ENCODE measurements at regions of chr7 and their contacts with region 1.

Region 1: GRCh38 chr7:131945313-131945911 is 389.0 kb upstream of the PODXL start:
- DNase-seq: no peak
- H3K4me3 ChIP-seq: peak overlapping the region; percentile 32
- CTCF ChIP-seq: peak; percentile 93

Region 2: GRCh38 chr7:131654668-131655326 is 290.6 kb before region 1 on chr7:
- CTCF ChIA-PET with region 1: no interaction called
- POLR2A ChIA-PET with region 1: no interaction called
- DNase-seq: peak; percentile 1
- H3K4me3 ChIP-seq: no peak overlapping the region
- CTCF ChIP-seq: peak; percentile 99

Region 3: DNA sequence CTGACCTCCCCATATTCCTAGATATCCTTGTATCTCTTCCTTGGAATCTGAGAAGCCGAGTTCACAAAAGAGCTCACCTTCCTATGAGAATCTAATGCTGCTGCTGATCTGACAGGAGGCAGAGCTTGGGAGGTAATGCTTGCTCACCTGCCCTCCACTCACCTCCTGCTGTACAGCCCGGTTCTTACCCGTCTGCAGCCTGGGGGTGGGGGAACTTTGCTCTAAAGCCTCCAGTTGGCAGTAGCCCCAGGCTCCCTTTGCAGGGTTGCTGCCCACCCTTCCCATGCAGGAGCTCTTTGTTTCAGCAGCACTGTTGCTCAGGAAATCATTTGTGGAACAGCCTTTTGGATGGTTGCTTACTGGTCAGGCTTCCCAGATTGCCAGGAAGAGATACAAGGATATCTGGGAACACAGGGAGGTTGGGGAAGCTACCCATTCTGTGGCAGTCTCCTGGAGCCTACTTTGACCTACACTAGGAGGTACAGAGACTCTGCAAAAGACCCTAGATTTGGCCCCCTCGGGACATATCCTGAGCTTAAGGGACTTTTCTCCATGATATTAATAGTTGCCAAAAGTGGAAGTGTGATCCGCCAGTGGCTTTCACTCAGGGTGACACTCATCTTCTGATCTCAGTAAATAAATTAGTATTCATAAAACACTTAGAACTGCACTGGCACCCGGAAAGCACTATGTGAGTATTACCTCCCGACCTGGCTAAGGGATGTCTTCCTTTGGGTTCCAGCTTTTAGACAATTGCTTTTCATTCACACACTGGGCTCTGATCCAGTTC is 25.3 kb before region 1 on chr7:
- CTCF ChIA-PET with region 1: interaction called, 18 read pairs
- POLR2A ChIA-PET with region 1: no interaction called
- DNase-seq: no peak
- H3K4me3 ChIP-seq: no peak overlapping the region
- CTCF ChIP-seq: no peak

Region 4: DNA sequence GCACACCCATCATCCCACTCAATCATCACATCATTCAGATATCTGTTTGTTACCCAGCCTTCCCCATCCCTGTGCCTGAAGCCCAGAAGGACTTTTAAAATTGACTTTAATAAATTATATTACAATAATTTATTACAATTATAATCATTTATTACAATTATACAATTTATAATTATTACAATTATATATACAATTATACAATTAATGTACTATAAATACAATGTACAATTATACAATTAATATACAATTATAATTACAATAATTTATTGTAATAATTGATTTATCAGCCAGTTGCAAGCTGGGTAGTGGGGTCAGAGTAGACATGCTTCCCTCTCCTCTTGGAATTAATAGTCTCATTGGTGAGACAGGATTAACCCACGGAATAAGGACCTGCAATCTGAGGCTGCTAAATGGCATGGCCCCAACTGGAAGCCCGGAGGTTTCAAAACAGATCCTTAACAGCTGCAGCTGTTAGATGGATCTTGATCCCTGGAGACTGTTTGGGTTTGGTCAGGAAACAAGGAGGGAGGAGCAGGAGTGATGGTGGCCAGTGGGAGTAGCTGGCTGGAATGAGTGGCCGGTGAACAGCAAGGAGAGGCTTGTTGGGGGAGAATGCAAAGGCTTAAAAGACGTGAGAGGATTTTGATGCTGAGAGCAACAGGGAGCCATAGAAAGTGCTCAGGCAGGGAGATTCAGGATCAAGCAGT is 13.8 kb after region 1 on chr7:
- CTCF ChIA-PET with region 1: interaction called, 27 read pairs
- POLR2A ChIA-PET with region 1: interaction called, 3 read pairs
- DNase-seq: no peak
- H3K4me3 ChIP-seq: no peak overlapping the region
- CTCF ChIP-seq: no peak

Region 5: GRCh38 chr7:132249614-132249972 is 304.2 kb after region 1 on chr7:
- CTCF ChIA-PET with region 1: interaction called, 55 read pairs
- POLR2A ChIA-PET with region 1: no interaction called
- DNase-seq: no peak
- H3K4me3 ChIP-seq: no peak overlapping the region
- CTCF ChIP-seq: peak; percentile 21